ENCODE measurements at regions of chr2 and their contacts with region 1.

Region 1: DNA sequence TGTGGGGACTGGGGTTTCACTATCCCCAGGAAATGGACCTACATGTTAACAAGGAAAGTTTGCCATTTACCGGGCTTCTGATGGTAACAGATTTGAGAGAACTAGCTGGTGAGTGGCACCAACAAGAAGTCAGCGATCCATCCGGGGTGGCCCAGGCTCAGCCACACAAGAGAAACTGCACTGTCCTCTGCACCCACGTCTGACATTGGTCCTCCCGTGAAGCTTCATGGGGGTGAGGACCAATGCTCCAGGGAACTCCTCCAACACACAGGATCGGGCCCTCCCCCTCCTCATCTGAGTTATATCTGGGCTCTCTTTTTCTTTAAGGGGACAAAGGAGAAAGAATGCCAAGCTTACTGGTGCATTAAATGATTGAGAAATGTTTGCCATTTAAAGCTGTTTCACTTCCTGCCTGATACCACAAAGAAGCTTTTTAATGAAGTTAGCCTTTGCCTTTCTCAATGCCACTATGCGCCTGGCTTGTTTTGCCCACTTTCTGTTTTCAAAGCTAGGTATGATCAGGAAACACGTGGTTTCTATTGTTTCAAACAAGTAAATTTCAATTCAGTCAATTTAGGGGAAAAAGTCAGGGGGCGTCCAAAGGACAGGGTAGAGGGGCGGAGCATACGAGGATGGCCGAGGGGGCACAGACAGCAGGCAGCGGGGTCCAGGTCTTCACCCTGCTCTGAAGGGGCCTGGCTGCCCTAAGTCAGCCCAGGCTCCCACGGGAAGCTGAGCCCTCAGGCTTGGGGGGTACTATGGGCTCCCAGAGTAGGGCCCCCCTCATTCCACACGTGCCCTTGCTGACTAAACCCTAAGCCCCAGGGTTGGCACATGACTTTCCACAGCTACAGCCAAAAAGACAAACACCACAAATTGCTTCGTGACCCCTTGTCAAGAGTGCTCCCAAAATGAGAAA is 204.0 kb upstream of the ID2 start:
- DNase-seq: peak; percentile 51
- H3K4me3 Mint-ChIP-seq: peak overlapping the region; percentile 60
- H3K27ac Mint-ChIP-seq: peak overlapping the region; percentile 90
- H3K4me1 Mint-ChIP-seq: peaks cover 91% of the 10 kb centered on the region
- H3K27me3 Mint-ChIP-seq: no peaks in the 10 kb centered on the region

Region 2: GRCh38 chr2:8303322-8303832 is 174.4 kb before region 1 on chr2:
- CTCF ChIA-PET with region 1: no interaction called
- POLR2A ChIA-PET with region 1: no interaction called
- intact Hi-C with region 1: loop called (anchors 5 kb)
- DNase-seq: peak; percentile 81
- H3K4me3 Mint-ChIP-seq: no peak overlapping the region
- H3K27ac Mint-ChIP-seq: peak overlapping the region; percentile 16
- H3K4me1 Mint-ChIP-seq: peaks cover 62% of the 10 kb centered on the region
- H3K27me3 Mint-ChIP-seq: peaks cover 6% of the 10 kb centered on the region

Region 3: DNA sequence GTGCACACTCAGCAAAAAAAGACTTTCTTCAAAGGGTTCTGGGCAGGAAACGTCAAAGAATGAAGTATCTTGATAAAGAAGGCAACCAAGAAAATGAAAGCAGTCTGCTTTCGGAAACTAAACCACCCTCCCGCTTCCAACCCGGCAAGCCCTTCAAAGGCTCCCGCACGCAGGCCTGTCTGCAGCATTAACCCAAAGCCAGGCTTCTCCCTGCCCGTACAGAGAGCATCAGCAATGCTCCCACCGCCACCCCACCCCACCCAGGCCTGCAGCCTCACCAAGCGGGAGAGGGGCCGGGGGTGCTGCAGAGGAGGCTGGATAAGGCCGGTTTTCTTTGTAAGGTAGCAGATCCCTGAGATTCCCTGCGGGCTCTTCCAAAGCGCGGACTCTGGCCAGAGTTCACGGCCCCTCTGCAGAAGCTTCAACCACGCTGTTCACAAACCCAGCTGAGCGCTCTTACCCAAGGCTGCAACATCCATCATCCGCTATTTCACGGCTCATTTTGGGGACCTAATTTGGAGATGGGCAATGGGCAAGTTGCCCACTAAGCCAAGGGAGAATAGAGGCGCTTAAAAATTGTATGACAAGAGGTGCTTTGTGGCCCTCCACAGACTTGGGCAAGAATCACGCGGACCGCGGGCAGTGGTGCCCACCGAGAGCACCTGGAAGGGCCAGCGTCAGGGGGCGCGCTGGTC is 21.5 kb before region 1 on chr2:
- CTCF ChIA-PET with region 1: no interaction called
- POLR2A ChIA-PET with region 1: interaction called, 8 read pairs
- intact Hi-C with region 1: loop called (anchors 1 kb)
- DNase-seq: peak; percentile 73
- H3K4me3 Mint-ChIP-seq: peak overlapping the region; percentile 68
- H3K27ac Mint-ChIP-seq: peak overlapping the region; percentile 80
- H3K4me1 Mint-ChIP-seq: peaks cover 43% of the 10 kb centered on the region
- H3K27me3 Mint-ChIP-seq: no peaks in the 10 kb centered on the region

Region 4: GRCh38 chr2:8488001-8488738 is 10.4 kb after region 1 on chr2:
- CTCF ChIA-PET with region 1: interaction called, 3 read pairs
- POLR2A ChIA-PET with region 1: interaction called, 20 read pairs
- intact Hi-C with region 1: loop called (anchors 1 kb)
- DNase-seq: peak; percentile 88
- H3K4me3 Mint-ChIP-seq: peak overlapping the region; percentile 77
- H3K27ac Mint-ChIP-seq: peak overlapping the region; percentile 91
- H3K4me1 Mint-ChIP-seq: peaks cover 72% of the 10 kb centered on the region
- H3K27me3 Mint-ChIP-seq: no peaks in the 10 kb centered on the region

Region 5: GRCh38 chr2:8608411-8608954 is 130.7 kb after region 1 on chr2:
- CTCF ChIA-PET with region 1: no interaction called
- POLR2A ChIA-PET with region 1: no interaction called
- intact Hi-C with region 1: loop called (anchors 2 kb)
- DNase-seq: peak; percentile 67
- H3K4me3 Mint-ChIP-seq: no peak overlapping the region
- H3K27ac Mint-ChIP-seq: peak overlapping the region; percentile 72
- H3K4me1 Mint-ChIP-seq: peaks cover 34% of the 10 kb centered on the region
- H3K27me3 Mint-ChIP-seq: no peaks in the 10 kb centered on the region